ENCODE measurements at regions of chr2 and their contacts with region 1.

Region 1: DNA sequence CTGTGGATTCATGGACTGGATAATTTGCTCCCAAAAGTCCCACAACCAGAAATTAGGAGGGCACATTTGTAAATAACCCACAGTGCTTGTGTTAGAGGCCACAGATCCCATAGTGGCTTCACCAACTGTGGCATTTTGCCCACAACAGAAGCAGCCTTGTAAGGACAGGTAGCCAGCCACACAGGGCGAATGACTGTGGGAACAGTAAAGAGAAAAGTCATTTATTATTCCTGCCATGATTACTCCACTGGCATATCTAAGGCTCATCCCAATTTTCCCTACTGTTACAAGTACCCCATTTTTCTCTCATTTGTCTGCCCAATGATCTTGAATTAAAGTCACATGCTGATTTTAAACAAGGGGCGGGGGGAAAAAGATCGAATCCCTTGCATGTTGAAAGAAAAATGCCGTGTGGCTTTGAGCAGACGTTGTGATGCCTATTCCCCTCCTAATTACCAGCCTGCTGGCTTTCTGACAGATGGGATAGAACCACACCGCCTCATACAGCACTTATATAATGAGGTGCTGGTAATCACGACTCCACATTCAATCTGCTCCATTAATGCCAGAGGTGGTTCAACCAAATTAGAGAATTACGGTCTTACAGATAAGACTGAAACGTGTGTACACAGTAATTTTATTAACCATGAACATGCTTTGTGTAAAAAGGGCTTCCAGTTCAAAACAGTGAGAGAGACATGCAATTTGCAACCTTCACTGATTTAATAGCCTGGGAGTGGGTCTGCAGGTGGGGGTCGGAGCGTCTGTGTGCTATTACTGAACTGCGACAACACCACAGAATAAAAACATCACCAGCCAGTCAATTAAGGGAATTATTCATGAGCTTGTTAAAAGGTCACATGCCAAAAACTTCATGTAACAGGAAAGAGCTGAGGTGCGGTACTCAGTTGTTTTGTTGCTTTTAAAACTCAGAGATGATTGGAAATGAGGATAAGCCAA is 196.0 kb downstream of the TMEM163 start:
- DNase-seq: no peak
- H3K4me3 ChIP-seq: no peak overlapping the region
- H3K27ac ChIP-seq: no peak overlapping the region
- H3K4me1 ChIP-seq: no peaks in the 10 kb centered on the region
- H3K27me3 ChIP-seq: no peaks in the 10 kb centered on the region
- CTCF ChIP-seq: no peak
- POLR2A ChIP-seq: no peak

Region 2: DNA sequence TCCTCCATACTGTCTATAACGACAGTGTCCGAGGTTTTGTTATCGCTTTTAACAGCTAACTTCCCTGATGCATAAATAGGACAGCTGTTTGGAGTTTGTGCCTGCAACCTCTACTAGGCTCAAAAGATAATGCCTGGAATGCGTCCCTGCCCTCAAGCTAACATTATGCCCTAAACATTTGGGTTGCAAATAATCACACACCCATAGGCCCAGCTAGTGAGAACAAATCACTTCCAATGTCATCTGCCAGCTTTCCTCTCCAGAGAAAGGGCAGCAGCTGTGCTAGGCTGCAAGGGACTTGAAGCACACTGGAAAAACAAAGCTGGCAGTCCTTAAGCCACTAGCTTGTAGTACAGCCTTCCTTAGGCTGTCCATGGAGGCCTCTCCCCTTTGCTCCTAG is 1650.9 kb before region 1 on chr2:
- intact Hi-C with region 1: no loop called
- DNase-seq: no peak
- H3K4me3 ChIP-seq: no peak overlapping the region
- H3K27ac ChIP-seq: no peak overlapping the region
- H3K4me1 ChIP-seq: no peaks in the 10 kb centered on the region
- H3K27me3 ChIP-seq: no peaks in the 10 kb centered on the region
- CTCF ChIP-seq: no peak
- POLR2A ChIP-seq: no peak

Region 3: DNA sequence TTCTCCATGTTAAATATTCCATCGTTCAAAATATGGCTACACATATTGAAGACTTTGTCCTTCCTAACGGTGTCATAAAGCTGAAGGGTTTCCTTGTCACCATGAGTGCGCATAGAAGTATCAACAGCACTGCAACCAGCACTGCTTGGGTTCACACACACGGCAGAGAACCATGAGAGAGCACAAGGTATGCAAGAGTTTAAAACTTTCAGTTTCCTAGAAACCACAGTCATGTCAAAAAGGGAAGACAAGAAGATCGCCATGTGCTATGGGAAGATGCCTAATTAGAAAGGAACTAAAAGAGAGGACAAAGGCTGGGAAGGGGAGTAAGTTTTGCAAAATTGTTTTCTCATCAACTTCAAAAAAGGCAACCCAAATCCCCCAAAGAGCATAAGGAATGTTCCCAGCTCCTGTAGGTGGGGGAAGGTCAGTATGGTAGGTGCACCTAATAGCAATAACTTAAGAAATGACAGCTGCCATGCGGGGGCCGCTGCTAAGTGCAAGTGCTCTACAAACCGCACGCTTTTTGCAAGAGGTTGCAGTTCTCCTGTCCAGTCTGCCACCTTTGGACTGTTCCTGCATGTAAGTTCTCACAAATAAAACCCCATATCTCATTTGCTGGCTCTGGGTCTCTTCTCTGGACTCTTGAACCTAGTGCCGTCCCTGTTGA is 59.2 kb after region 1 on chr2:
- intact Hi-C with region 1: loop called (anchors 2 kb)
- DNase-seq: no peak
- H3K4me3 ChIP-seq: no peak overlapping the region
- H3K27ac ChIP-seq: no peak overlapping the region
- H3K4me1 ChIP-seq: no peaks in the 10 kb centered on the region
- H3K27me3 ChIP-seq: no peaks in the 10 kb centered on the region
- CTCF ChIP-seq: no peak
- POLR2A ChIP-seq: no peak